GM12878 (cell line): ENCODE measurements at regions of chr19 and their contacts with region 1.

Region 1: DNA sequence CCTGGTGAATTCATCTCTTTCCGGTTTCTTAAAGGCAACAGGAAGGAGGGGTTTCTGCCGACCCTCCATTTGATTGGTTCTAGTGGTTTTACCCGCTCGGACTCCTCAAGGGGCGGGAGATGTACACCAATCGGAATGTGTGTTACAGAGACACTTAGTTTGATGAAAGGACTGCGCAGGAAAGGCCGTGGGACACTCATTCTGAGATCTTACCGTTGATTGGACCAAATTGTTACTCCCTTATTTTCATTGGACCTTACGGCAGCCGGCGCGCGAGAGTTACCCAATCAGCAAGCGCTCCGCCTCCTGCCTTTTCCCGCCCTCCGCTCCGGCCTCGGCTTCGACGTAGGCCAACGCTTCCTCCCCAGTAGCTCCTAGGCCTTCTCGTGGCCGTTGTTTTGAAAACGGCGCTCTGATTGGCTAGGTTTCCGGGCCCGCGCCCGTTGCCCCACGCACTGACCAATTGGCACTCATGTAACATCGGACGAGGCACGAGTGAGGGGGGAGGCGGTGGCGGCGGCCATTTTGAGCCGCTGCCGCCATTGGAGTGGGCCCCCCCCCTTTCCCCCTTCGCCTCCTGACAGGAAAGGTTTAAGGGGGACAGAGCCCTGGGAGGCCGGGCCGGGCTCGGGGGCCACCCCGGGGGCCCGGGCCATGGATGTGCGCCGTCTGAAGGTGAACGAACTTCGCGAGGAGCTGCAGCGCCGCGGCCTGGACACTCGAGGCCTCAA is at the start of gene HNRNPUL1:
- DNase-seq: peak; percentile 100
- ATAC-seq: peak; percentile 75
- H3K4me3 ChIP-seq: peak within 1 kb of the TSS; percentile 95
- H3K27ac ChIP-seq: peak within 1 kb of the TSS; percentile 100
- H3K4me1 ChIP-seq: no peaks in the 10 kb centered on the region
- H3K27me3 ChIP-seq: no peaks in the 10 kb centered on the region
- CTCF ChIP-seq: peak; percentile 20 to 26 (median 24); a peak in 2 of 6 replicates
- EP300 ChIP-seq: peak in 1 of 2 experiments; percentile 47; a peak in 1 of 4 replicates
- POLR2A ChIP-seq: 0 out of 2 replicates have a peak, but pooled peaks have one; percentile 2
- RAD21 ChIP-seq: no peak
- polyA plus RNA-seq, gene HNRNPUL1: 11.1 to 26.3 TPM

Region 2: DNA sequence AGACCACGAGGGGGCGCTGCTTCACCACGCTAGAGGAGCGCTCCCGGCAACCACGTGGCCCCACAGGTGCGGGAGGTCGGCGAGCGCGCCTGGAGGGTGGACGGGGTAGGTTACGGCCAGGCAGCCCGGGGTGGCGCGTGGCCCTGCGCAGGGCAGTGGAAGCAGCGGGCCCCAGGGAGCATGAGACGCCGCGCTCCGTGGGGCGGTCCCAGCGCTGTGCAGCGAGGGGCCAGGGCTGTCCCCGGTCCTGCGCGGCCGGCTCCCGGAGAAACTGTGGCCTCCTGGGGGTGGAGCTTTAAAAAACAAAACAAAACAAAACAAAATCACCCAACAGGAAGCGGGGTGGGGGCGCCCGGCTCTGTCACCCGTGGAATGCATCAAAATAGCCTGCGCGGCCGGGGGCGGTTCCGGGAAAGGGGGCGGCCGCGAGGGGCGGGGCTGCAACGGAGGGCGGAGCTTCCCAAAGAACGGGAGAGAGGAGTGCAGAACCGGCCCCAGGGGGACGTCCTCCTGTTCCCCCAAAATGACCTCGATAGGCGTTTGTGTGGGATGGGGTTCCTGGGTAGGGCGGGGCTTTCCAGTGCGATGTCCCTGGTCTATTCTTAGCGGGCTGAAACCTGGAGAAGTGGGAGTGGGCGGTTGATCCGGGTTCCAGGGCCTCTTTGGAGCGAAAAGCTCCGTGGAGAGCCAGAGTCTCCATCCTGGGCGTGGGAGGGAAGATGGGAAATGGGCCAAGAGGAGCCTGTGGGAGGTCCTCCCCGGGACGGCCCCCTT is 600.9 kb before region 1 on chr19:
- CTCF ChIA-PET with region 1: no interaction called
- POLR2A ChIA-PET with region 1: no interaction called
- RAD21 ChIA-PET with region 1: interaction called, 3 read pairs
- SMC1A ChIA-PET with region 1: interaction called, 3 read pairs
- in situ Hi-C with region 1: no loop called
- intact Hi-C with region 1: loop called (anchors 2 kb)
- DNase-seq: peak; percentile 24
- ATAC-seq: peak; percentile 97
- H3K4me3 ChIP-seq: peak overlapping the region; percentile 83
- H3K27ac ChIP-seq: no peak overlapping the region
- H3K4me1 ChIP-seq: peaks cover 6% of the 10 kb centered on the region
- H3K27me3 ChIP-seq: no peaks in the 10 kb centered on the region
- CTCF ChIP-seq: peak in 2 of 3 experiments; percentile 94 to 95; a peak in 5 of 6 replicates
- EP300 ChIP-seq: no peak
- POLR2A ChIP-seq: peak; percentile 68
- RAD21 ChIP-seq: peak; percentile 90

Region 3: DNA sequence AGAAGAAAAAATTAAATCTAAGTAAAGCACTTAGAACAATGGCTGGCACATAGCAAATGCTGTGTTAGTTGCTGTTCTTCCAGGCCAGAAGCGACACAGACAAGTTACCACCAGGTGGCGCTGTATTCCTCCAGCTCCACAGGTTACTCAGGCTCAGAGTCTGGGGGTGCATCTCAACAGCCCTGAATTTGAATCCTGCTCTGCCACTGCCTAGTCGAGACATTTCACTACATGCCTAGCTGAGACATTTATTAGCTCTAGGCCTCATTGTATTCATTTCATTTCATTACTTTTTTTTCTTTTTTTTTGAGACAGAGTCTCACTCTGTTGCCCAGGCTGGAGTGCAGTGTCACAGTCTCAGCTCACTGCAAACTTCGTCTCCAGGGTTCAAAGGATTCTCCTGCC is 289.4 kb before region 1 on chr19:
- CTCF ChIA-PET with region 1: interaction called, 4 read pairs
- POLR2A ChIA-PET with region 1: no interaction called
- RAD21 ChIA-PET with region 1: interaction called, 3 read pairs
- SMC1A ChIA-PET with region 1: no interaction called
- in situ Hi-C with region 1: no loop called
- intact Hi-C with region 1: loop called (anchors 2 kb)
- DNase-seq: peak; percentile 3
- ATAC-seq: peak; percentile 89
- H3K4me3 ChIP-seq: no peak overlapping the region
- H3K27ac ChIP-seq: no peak overlapping the region
- H3K4me1 ChIP-seq: no peaks in the 10 kb centered on the region
- H3K27me3 ChIP-seq: no peaks in the 10 kb centered on the region
- CTCF ChIP-seq: peak; percentile 64 to 74 (median 73)
- EP300 ChIP-seq: no peak
- POLR2A ChIP-seq: no peak
- RAD21 ChIP-seq: peak; percentile 57

Region 4: DNA sequence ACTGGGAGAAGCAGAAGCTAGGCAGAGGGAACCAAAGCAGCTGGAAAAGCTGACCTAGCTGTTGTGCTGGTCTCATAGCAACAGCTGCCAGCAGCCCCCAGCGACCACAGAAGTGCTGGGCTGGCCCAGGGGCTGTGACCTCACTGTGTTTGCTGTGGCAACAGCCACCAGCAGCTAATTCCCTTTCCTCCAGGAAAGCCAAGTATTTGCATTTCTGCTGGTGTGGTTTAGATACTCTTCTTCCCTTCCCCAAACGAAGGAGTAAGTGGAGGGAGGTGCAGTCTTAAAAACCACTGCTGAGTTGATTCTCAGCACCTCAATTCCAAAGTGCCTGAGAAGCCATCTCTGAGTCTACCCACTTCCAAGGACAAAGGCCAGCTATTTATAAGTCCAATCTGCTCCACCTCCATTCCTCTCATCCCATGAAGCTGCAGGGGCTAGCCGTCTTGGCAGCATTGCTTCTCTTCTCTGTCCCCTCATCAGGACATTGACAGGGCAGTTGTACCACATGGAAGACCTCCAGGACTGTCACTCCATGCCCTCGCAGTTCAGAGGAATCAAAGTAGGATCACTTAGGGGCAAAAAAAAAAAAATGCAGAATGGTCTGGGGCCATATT is 34.4 kb after region 1 on chr19:
- CTCF ChIA-PET with region 1: interaction called, 13 read pairs
- POLR2A ChIA-PET with region 1: interaction called, 11 read pairs
- RAD21 ChIA-PET with region 1: interaction called, 28 read pairs
- SMC1A ChIA-PET with region 1: interaction called, 18 read pairs
- in situ Hi-C with region 1: no loop called
- intact Hi-C with region 1: no loop called
- DNase-seq: no peak
- ATAC-seq: peak; percentile 55
- H3K4me3 ChIP-seq: peak overlapping the region; percentile 1; the same call in 1 of the 2 replicates
- H3K27ac ChIP-seq: peak overlapping the region; percentile 95
- H3K4me1 ChIP-seq: peaks cover 61% of the 10 kb centered on the region
- H3K27me3 ChIP-seq: no peaks in the 10 kb centered on the region
- CTCF ChIP-seq: no peak
- EP300 ChIP-seq: peak in 1 of 2 experiments; percentile 75; a peak in 2 of 4 replicates
- POLR2A ChIP-seq: no peak; the same call in 1 of the 2 replicates
- RAD21 ChIP-seq: no peak

Region 5: DNA sequence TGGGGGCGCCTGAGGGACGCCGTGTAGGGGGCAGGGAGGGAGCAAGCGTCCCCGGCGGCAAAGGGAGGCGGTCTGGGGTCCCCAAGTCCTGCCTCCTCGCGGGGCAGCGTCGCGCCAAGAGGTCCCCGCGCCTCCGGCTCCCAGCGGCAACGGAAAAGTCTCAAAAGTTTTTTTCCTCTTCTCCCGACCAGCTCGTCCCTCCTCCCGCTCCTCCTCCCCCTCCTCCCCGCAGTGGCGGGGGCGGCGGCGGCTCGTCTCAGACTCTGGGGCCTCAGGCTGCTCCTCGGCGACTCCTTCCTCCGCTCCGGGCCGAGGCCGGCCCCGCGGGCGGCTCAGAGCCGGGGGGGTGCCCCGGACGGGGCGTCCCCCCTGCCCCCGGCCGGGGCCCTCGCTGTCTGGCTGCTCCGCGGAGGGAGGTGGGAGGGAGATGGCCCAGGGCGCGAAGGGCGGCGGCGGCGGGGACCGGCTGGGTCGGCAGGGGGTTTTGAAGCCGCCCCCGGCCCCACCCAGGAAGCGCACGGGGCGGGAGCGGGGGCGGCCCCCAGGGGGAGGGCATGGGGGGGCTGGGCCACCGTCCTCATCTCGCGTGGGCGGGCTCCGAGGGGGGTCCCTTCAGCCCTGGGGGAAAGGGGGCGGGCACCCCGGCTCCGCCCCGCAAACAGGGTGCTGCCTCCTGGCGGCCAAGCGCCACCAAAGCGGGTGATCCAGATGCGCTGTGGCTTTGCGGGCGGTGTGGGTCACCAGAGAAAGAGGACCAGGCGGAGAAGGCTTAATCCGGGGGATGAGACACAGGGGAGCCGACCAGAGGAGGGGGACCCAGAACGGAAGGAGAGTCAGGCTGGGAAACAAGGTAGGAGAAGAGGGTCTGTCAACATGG is 89.7 kb after region 1 on chr19 and contains the start of gene TGFB1:
- CTCF ChIA-PET with region 1: interaction called, 19 read pairs
- POLR2A ChIA-PET with region 1: interaction called, 8 read pairs
- RAD21 ChIA-PET with region 1: interaction called, 5 read pairs
- SMC1A ChIA-PET with region 1: interaction called, 14 read pairs
- in situ Hi-C with region 1: no loop called
- intact Hi-C with region 1: loop called (anchors 2 kb)
- DNase-seq: peak; percentile 62
- ATAC-seq: peak; percentile 64
- H3K4me3 ChIP-seq: peak within 1 kb of the TSS; percentile 89
- H3K27ac ChIP-seq: peak within 1 kb of the TSS; percentile 84
- H3K4me1 ChIP-seq: peaks cover 16% of the 10 kb centered on the region
- H3K27me3 ChIP-seq: no peaks in the 10 kb centered on the region
- CTCF ChIP-seq: peak; percentile 88 to 94 (median 93)
- EP300 ChIP-seq: peak in 1 of 2 experiments; percentile 27; a peak in 1 of 4 replicates
- POLR2A ChIP-seq: peak; percentile 90
- RAD21 ChIP-seq: peak; percentile 56
- polyA plus RNA-seq, gene TGFB1: 0.23 to 0.37 TPM

Region 6: DNA sequence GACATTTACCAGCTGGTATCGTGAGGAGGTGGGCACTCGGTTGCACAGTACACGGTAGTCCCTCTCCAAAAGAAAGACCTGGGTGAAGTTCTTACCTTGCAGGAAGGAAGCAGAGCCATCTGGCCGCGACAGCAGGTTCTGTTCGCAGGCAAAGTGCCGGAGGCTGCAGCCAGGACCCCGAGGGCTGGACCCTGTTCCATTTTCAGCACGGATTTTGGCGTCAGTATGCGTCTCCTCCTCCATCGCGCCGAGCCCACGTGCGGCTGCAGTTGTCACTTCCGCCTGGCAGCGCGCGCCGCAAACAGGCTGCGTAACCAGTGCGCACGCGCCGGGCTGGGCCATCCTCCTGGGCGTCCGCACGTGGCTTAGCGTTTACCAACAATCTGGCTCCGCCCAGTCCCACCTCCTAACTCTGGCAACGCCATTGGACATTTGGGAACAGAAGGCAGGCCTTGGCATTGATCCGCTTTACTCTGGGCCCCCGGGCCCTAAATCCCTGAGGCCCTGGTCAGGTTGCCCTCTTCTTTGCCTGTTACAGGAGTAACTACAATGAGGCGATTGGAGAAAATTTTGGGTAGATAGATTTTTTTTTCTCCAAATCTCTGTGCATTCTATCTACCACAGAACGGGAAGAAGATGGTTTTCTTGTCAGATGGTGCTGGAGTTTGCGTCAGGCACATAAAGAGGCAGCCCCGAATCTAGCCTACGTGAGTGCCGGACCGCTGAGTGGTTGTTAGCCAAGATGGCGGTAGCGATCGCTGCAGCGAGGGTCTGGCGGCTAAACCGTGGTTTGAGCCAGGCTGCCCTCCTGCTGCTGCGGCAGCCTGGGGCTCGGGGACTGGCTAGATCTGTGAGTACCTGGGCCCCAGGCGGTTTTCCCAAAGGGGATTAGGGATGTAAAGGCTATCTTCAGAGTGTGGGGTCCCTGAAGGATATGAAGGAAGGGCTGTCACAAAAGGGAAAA is 133.4 kb after region 1 on chr19 and contains the starts of genes BCKDHA and EXOSC5:
- CTCF ChIA-PET with region 1: no interaction called
- POLR2A ChIA-PET with region 1: no interaction called
- RAD21 ChIA-PET with region 1: no interaction called
- SMC1A ChIA-PET with region 1: no interaction called
- in situ Hi-C with region 1: no loop called
- intact Hi-C with region 1: loop called (anchors 5 kb)
- DNase-seq: peak; percentile 99
- ATAC-seq: peak; percentile 94
- H3K4me3 ChIP-seq: peak within 1 kb of the TSS; percentile 80
- H3K27ac ChIP-seq: peak within 1 kb of the TSS; percentile 99
- H3K4me1 ChIP-seq: peaks cover 21% of the 10 kb centered on the region
- H3K27me3 ChIP-seq: no peaks in the 10 kb centered on the region
- CTCF ChIP-seq: no peak
- EP300 ChIP-seq: no peak
- POLR2A ChIP-seq: peak; percentile 78
- RAD21 ChIP-seq: no peak
- polyA plus RNA-seq, gene BCKDHA: 9.9 to 28.7 TPM
- polyA plus RNA-seq, gene EXOSC5: 20.6 to 25.3 TPM